ENCODE measurements at regions of chr14 and their contacts with region 1.

Region 1: GRCh38 chr14:91323671-91324605 is 79.4 kb upstream of the GPR68 start:
- H3K4me3 ChIP-seq: peak overlapping the region; percentile 15
- H3K27ac ChIP-seq: no peak overlapping the region
- H3K4me1 ChIP-seq: no peaks in the 10 kb centered on the region; the same call in 1 of the 2 replicates
- CTCF ChIP-seq: peak; percentile 80

Region 2: GRCh38 chr14:91338379-91338778 is 14.4 kb after region 1 on chr14:
- CTCF ChIA-PET with region 1: interaction called, 18 read pairs
- POLR2A ChIA-PET with region 1: no interaction called
- H3K4me3 ChIP-seq: no peak overlapping the region
- H3K27ac ChIP-seq: no peak overlapping the region
- H3K4me1 ChIP-seq: no peaks in the 10 kb centered on the region
- CTCF ChIP-seq: no peak

Region 3: GRCh38 chr14:91418387-91419043 is 94.6 kb after region 1 on chr14:
- CTCF ChIA-PET with region 1: interaction called, 77 read pairs
- POLR2A ChIA-PET with region 1: no interaction called
- H3K4me3 ChIP-seq: peak overlapping the region; percentile 57
- H3K27ac ChIP-seq: peak overlapping the region; percentile 66; the same call in 1 of the 2 replicates
- H3K4me1 ChIP-seq: peaks cover 3% of the 10 kb centered on the region; the same call in 1 of the 2 replicates
- CTCF ChIP-seq: peak; percentile 91